ENCODE measurements at regions of chr9 and their contacts with region 1.

Region 1: DNA sequence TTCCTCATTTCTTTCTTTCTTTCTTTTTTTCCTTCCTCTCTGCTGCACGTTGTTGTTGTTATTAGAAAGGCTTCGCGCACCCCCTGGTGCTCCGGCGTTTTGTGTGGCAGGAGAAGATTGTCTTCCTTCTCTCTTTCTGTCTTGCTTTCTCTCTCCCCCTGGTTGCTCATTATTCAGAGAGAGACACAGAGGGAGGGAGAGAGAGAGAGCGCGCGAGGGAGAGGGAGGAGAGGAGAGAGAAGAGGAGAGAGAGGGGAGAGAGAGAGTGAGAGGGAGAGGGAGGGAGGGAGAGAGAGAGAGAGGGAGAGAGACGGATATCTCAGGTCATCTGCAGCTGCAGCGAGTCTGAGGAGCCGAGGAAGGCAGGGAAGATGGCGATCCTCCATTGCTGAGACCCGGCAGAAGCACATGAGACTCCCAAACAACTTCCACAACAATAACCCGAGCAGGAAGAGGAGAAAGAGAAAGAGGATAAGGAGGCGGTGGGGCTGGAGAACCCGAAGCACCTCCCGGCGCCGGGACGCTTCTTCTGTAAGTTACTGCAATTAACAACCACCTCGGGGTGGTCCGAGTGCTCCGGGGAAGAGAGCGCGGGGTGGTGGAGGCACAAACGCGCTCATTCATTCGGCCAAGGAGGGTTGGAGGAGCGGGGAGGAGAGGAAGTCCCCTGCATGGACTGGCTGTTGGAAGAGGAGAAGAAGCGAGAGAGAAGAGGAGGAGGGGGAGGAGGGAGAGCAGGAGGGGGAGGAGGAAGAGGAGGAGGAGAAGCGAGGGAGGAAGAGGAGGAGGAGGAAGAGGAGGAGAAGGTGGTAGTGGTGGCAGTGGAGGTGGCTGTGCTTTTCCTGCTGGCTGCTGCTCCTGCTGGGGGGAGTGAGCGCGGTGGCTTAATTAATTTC is at the start of gene ZNF462:
- DNase-seq: peak; percentile 66
- H3K4me3 ChIP-seq: peak within 1 kb of the TSS; percentile 69 to 97 (median 97)
- H3K27ac ChIP-seq: peak within 1 kb of the TSS; percentile 54
- H3K4me1 ChIP-seq: peaks cover 17% of the 10 kb centered on the region
- H3K27me3 ChIP-seq: no peaks in the 10 kb centered on the region
- CTCF ChIP-seq: peak in 1 of 2 donors; percentile 14
- POLR2A ChIP-seq: peak; percentile 74
- total RNA-seq, gene ZNF462: 24.7 and 27.0 TPM in 2 replicates

Region 2: GRCh38 chr9:106648799-106649198 is 214.3 kb before region 1 on chr9:
- CTCF ChIA-PET with region 1: no interaction called
- POLR2A ChIA-PET with region 1: no interaction called
- dilution Hi-C with region 1: no loop called
- intact Hi-C with region 1: loop called (anchors 5 kb)
- DNase-seq: peak; percentile 1
- H3K4me3 ChIP-seq: no peak overlapping the region
- H3K27ac ChIP-seq: no peak overlapping the region
- H3K4me1 ChIP-seq: no peaks in the 10 kb centered on the region
- H3K27me3 ChIP-seq: no peaks in the 10 kb centered on the region
- CTCF ChIP-seq: no peak
- POLR2A ChIP-seq: no peak

Region 3: DNA sequence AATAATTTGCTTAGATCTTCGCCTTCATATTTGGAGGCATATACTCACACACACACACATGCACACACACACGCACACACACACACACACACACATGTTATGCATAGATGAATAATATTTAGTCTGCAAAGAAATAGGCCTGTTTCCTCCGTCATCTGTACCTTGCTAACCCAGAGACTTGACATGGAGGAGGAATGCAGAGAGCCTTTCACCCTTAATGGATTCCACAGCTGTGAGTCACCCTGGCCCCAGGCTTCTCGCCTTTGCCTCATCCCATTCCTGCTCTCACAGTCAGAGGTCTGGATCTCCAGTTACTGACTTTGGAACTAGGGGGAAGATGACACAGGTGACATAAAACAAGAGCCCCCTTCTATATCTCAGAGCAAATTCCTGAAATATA is 29.6 kb after region 1 on chr9:
- CTCF ChIA-PET with region 1: interaction called, 3 read pairs
- POLR2A ChIA-PET with region 1: no interaction called
- dilution Hi-C with region 1: no loop called
- intact Hi-C with region 1: loop called (anchors 1 kb)
- DNase-seq: peak; percentile 89
- H3K4me3 ChIP-seq: no peak overlapping the region
- H3K27ac ChIP-seq: peak overlapping the region; percentile 93
- H3K4me1 ChIP-seq: peaks cover 20% of the 10 kb centered on the region
- H3K27me3 ChIP-seq: no peaks in the 10 kb centered on the region
- CTCF ChIP-seq: no peak
- POLR2A ChIP-seq: no peak

Region 4: GRCh38 chr9:106962615-106963363 is 99.7 kb after region 1 on chr9:
- CTCF ChIA-PET with region 1: interaction called, 3 read pairs
- POLR2A ChIA-PET with region 1: no interaction called
- dilution Hi-C with region 1: no loop called
- intact Hi-C with region 1: loop called (anchors 1 kb)
- DNase-seq: peak; percentile 97
- H3K4me3 ChIP-seq: no peak overlapping the region
- H3K27ac ChIP-seq: peak overlapping the region; percentile 81
- H3K4me1 ChIP-seq: peaks cover 21% of the 10 kb centered on the region
- H3K27me3 ChIP-seq: no peaks in the 10 kb centered on the region
- CTCF ChIP-seq: no peak
- POLR2A ChIP-seq: no peak

Region 5: GRCh38 chr9:107137495-107138202 is 274.6 kb after region 1 on chr9:
- CTCF ChIA-PET with region 1: interaction called, 3 read pairs
- POLR2A ChIA-PET with region 1: no interaction called
- dilution Hi-C with region 1: no loop called
- intact Hi-C with region 1: loop called (anchors 1 kb)
- DNase-seq: peak; percentile 17
- H3K4me3 ChIP-seq: no peak overlapping the region
- H3K27ac ChIP-seq: no peak overlapping the region
- H3K4me1 ChIP-seq: no peaks in the 10 kb centered on the region
- H3K27me3 ChIP-seq: no peaks in the 10 kb centered on the region
- CTCF ChIP-seq: peak; percentile 54 to 67
- POLR2A ChIP-seq: no peak

Region 6: GRCh38 chr9:107282753-107283625 is 419.9 kb after region 1 on chr9 and contains the start of gene RAD23B:
- CTCF ChIA-PET with region 1: no interaction called
- POLR2A ChIA-PET with region 1: no interaction called
- dilution Hi-C with region 1: no loop called
- intact Hi-C with region 1: loop called (anchors 5 kb)
- DNase-seq: peak; percentile 99
- H3K4me3 ChIP-seq: peak within 1 kb of the TSS; percentile 54 to 93 (median 92)
- H3K27ac ChIP-seq: peak within 1 kb of the TSS; percentile 82
- H3K4me1 ChIP-seq: peaks cover 14% of the 10 kb centered on the region
- H3K27me3 ChIP-seq: no peaks in the 10 kb centered on the region
- CTCF ChIP-seq: no peak
- POLR2A ChIP-seq: peak; percentile 73
- total RNA-seq, gene RAD23B: 100 and 102 TPM in 2 replicates

Measured in endothelial cell of umbilical vein (primary cell).